Endothelial cell of umbilical vein (primary cell): ENCODE measurements at regions of chr6 and their contacts with region 1.

Region 1: GRCh38 chr6:24283043-24283985 is 74.5 kb downstream of the DCDC2 start:
- DNase-seq: peak; percentile 79
- H3K4me3 ChIP-seq: no peak overlapping the region
- H3K27ac ChIP-seq: no peak overlapping the region
- H3K4me1 ChIP-seq: no peaks in the 10 kb centered on the region
- H3K27me3 ChIP-seq: no peaks in the 10 kb centered on the region
- CTCF ChIP-seq: peak; percentile 43 to 57
- POLR2A ChIP-seq: no peak

Region 2: GRCh38 chr6:24359640-24360454 is 76.5 kb after region 1 on chr6:
- CTCF ChIA-PET with region 1: interaction called, 11 read pairs
- POLR2A ChIA-PET with region 1: no interaction called
- dilution Hi-C with region 1: no loop called
- intact Hi-C with region 1: loop called (anchors 2 kb)
- DNase-seq: peak; percentile 50
- H3K4me3 ChIP-seq: peak overlapping the region; percentile 36 to 45 (median 42)
- H3K27ac ChIP-seq: no peak overlapping the region
- H3K4me1 ChIP-seq: peaks cover 2% of the 10 kb centered on the region
- H3K27me3 ChIP-seq: peaks cover 11 to 31% of the 10 kb centered on the region in 2 experiments
- CTCF ChIP-seq: peak; percentile 75 to 86
- POLR2A ChIP-seq: no peak

Region 3: DNA sequence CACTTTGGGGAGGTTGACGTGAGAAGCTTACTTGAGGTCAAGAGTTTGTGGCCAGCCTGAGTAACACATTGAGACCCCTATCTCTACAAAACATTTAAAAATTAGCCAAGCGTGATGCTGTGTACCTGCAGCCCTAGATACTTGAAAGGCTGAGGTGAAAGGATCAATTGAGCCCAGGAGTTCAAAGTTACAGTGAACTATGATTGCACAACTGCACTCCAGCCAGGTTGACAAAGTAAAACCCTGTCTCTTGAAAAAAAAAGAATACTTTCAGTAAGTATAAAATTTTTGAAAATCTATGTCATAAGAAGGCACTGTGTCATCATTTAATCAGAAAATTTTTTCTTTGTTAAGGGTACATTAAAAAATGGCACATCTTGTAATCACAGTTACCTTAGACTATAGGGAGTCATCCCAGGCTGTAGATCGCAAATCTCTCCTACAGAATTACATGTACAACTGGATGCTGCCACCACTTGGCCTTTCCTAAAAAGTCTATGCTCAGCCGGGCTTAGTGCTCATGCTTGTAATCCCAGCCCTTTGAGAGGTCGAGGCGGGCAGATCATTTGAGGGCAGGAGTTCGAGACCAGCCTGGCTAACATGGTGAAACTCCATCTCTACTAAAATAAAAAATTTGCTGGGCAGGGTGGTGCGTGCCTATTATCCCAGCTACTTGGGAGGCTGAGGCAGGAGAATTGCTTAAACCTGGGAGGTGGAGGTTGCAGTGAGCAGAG is 102.4 kb after region 1 on chr6:
- CTCF ChIA-PET with region 1: interaction called, 68 read pairs
- POLR2A ChIA-PET with region 1: no interaction called
- dilution Hi-C with region 1: no loop called
- intact Hi-C with region 1: no loop called
- DNase-seq: no peak
- H3K4me3 ChIP-seq: no peak overlapping the region
- H3K27ac ChIP-seq: no peak overlapping the region
- H3K4me1 ChIP-seq: no peaks in the 10 kb centered on the region
- H3K27me3 ChIP-seq: no peaks in the 10 kb centered on the region
- CTCF ChIP-seq: no peak
- POLR2A ChIP-seq: no peak